ENCODE measurements at regions of chr16 and their contacts with region 1.

Region 1: DNA sequence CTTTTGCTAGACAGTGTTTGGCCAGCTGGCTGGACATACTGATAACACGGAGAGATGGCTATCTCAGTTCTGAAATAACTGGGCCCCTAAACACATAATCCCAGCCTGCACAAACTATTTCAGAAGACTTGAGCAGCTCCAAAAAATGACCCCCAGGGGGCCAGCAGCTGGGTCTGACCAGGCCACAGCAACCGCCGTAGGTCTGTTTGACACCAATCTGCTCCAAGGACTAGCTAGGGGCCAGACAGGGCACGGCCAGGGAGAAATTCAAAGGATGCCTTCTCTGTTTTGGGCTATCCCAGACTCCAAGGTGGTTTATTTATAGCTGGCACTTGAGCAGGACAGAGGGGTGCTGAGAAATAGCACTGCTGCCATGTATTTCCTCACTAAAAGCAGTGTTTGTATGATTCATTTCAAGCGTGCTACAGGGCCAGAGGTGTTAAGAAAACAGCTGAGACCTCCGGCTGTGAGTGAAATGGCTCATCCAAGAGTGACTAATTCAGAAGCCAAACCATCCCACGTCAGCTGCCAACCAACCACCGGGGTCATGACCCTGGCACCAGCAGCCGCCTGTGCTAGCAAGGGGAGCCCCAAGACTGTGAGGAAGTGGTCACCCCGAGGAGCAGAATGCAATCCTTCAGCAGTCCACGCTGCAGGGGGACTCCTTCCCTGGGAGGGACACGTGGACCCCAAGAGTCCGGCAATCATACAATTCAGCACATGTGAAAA is 5.7 kb downstream of the GGA2 start:
- DNase-seq: peak; percentile 38 to 70 (median 52)
- ATAC-seq: no peak
- H3K4me3 ChIP-seq: no peak overlapping the region
- H3K27ac ChIP-seq: peak overlapping the region; percentile 73 to 93 (median 84)
- H3K4me1 ChIP-seq: peaks cover 86% of the 10 kb centered on the region
- H3K27me3 ChIP-seq: no peaks in the 10 kb centered on the region
- CTCF ChIP-seq: no peak
- POLR2A ChIP-seq: no peak

Region 2: GRCh38 chr16:23556881-23557778 is 52.5 kb after region 1 on chr16 and contains the starts of genes EARS2 and UBFD1:
- intact Hi-C with region 1: loop called (anchors 10 kb)
- DNase-seq: peak; percentile 98 to 99 (median 99)
- ATAC-seq: peak; percentile 96
- H3K4me3 ChIP-seq: peak within 1 kb of the TSS; percentile 72 to 90
- H3K27ac ChIP-seq: peak within 1 kb of the TSS; percentile 81 to 91 (median 83)
- H3K4me1 ChIP-seq: peaks cover 41% of the 10 kb centered on the region
- H3K27me3 ChIP-seq: no peaks in the 10 kb centered on the region
- CTCF ChIP-seq: peak; percentile 89 to 100 (median 99)
- POLR2A ChIP-seq: peak; percentile 8 to 73 (median 64)
- total RNA-seq, gene EARS2: 18.2 to 83.1 TPM
- total RNA-seq, gene UBFD1: 42.0 to 57.0 TPM